Activated CD4-positive, alpha-beta memory T cell treated with anti-CD3 and anti-CD28 coated beads for 36 hours (primary cell): ENCODE measurements at regions of chr20 and their contacts with region 1.

Region 1: DNA sequence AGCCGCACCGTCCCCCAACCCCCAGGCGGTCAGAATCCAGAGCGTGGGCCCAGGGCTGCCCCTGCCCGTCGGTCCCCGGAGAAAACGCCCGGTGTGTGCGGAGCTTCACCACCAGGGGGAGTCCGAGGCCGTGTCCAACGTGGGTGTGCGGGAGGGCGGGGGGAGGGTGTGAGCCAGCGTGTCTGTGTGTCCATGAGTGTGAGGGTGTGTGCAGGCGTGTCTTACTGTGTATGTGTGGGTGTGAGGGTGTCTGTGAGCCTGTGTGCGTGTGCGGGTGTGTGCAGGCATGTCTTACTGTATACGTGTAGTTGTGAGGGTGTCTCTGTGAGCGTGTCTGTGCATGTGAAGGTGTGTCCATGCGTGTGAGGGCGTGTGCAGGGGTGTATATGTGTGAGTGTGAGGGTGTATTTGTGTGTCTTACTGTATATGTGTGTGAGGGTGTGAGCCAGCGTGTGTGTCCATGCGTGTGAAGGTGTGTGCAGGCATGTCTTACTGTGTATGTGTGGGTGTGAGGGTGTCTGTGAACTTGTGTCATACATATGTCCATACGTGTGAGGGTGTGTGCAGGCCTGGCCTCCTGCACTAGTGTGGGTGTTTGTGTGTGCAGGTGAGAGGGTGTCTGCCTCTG is 24.6 kb upstream of the GATA5 start:
- DNase-seq: peak; percentile 87
- H3K4me3 Mint-ChIP-seq: no peak overlapping the region
- H3K27ac Mint-ChIP-seq: peak overlapping the region; percentile 26
- H3K4me1 Mint-ChIP-seq: peaks cover 29% of the 10 kb centered on the region
- H3K27me3 Mint-ChIP-seq: peaks cover 3% of the 10 kb centered on the region

Region 2: DNA sequence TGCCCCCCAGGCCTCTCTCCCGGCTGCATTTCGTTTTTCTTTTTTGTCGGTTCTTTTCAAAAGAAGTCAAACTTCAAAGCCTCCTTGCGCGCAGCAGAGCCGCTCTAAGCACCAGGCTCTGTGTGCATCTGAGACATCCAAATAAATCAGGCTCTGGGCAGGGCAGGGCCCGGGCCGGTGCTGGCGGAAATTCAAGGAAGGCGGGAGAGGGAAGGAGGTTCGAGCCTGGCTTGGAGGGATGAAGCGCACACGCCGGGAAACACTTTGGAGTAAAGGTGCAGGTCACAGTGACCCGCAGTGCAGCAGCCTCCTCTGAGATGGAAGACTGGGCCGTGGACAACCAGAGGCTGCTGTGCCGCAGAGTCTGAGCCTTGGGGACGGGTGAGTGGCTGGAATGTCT is 30.3 kb before region 1 on chr20:
- CTCF ChIA-PET with region 1: no interaction called
- POLR2A ChIA-PET with region 1: no interaction called
- intact Hi-C with region 1: no loop called
- DNase-seq: no peak
- H3K4me3 Mint-ChIP-seq: no peak overlapping the region
- H3K27ac Mint-ChIP-seq: no peak overlapping the region
- H3K4me1 Mint-ChIP-seq: no peaks in the 10 kb centered on the region
- H3K27me3 Mint-ChIP-seq: peaks cover 17% of the 10 kb centered on the region

Region 3: GRCh38 chr20:62523473-62524203 is 23.3 kb after region 1 on chr20:
- CTCF ChIA-PET with region 1: interaction called, 6 read pairs
- POLR2A ChIA-PET with region 1: interaction called, 3 read pairs
- intact Hi-C with region 1: loop called (anchors 1 kb)
- DNase-seq: peak; percentile 89
- H3K4me3 Mint-ChIP-seq: no peak overlapping the region
- H3K27ac Mint-ChIP-seq: no peak overlapping the region
- H3K4me1 Mint-ChIP-seq: peaks cover 15% of the 10 kb centered on the region
- H3K27me3 Mint-ChIP-seq: peaks cover 20% of the 10 kb centered on the region

Region 4: DNA sequence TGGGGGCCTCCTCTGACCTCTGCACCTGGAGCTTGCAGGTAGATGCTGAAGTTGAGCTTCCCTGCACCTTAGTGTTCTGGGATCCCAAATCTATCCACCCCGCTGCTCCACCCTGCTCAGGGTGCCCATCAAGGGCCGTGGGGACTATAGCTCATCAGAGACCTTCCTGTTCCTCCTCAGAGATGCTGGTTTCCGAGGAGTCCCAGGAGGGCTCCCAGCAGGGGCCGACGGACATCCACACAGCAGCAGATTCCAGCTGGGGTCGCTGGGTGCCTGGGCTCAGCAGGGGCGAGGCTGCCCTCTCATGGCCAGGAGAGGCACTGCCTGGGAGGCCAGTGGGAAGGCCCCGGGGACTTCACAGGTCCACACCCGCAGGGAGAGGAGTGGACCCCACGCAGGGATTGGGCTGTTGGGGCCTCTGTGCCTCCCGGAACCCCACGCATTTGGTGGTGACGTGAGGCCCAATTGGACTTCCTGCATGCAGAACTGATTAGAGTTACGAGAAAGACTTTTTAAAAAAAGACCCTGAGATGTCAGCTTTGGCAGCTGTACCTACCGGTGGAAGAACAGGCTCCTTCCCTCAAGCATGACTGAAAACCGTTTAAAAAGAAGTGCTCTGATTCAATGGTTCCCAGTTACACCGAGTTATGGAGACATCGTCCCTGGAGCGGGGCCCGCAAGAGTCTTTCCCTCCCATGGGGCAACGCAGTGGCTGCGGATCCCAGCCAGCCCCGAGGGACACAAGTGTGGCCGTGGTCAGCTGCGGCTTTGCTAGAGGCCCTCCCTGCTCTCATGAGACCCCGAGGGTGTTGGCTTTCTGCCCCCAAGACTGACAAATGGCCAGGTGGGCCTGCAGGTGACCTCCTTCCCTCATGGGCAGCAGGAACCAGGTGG is 116.6 kb after region 1 on chr20:
- CTCF ChIA-PET with region 1: interaction called, 41 read pairs
- POLR2A ChIA-PET with region 1: interaction called, 3 read pairs
- intact Hi-C with region 1: loop called (anchors 1 kb)
- DNase-seq: peak; percentile 84
- H3K4me3 Mint-ChIP-seq: peak overlapping the region; percentile 48
- H3K27ac Mint-ChIP-seq: peak overlapping the region; percentile 90
- H3K4me1 Mint-ChIP-seq: peaks cover 28% of the 10 kb centered on the region
- H3K27me3 Mint-ChIP-seq: no peaks in the 10 kb centered on the region

Region 5: DNA sequence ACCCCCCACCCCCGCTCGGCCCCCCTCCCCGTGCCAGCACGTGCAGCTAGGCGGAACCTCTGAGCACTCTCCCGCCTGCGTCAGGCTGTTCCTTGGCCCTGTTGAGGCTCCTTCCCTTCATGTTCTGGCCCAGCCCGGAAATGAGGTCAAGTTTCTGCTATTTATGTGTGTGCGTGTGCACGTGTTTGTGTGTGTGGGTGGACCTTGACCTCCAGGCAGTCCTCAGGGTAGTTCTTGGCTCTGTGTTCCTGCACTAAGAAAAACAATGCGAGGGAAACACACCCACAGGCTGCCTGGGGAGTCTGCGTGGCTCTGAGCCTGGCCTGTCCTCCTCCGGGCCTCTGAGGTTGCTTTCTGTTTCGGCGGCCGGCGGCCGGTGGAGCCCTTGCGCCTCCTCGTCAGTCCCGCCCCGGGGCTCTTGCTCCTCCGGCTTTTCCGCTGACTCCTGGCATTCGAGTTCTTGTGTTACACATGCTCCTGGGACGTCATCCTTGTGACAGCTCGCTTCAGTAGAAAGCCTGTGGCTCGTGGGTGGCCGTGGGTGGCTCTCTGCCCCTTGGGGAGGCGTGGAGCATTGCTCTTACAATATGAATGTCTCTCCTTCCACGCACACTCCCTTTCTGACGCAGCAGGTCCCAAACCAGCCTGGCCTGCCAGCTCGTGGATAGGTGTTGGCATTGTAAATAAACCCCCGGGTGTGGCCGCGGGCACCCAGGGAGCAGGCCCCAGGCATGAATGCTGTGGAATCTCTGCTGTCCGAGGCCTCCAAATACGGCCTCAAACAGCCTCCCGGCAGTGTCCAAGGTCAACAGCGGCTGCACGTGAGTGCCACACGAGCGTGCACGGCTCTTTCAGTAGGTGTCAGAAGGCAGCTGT is 151.9 kb after region 1 on chr20:
- CTCF ChIA-PET with region 1: interaction called, 4 read pairs
- POLR2A ChIA-PET with region 1: no interaction called
- intact Hi-C with region 1: loop called (anchors 1 kb)
- DNase-seq: peak; percentile 80
- H3K4me3 Mint-ChIP-seq: peak overlapping the region; percentile 63
- H3K27ac Mint-ChIP-seq: peak overlapping the region; percentile 84
- H3K4me1 Mint-ChIP-seq: peaks cover 29% of the 10 kb centered on the region
- H3K27me3 Mint-ChIP-seq: no peaks in the 10 kb centered on the region